Aorta (tissue), 5 donors: ENCODE measurements at regions of chr3 and their contacts with region 1.

Region 1: GRCh38 chr3:37640636-37641375 is 220.9 kb upstream of the CTDSPL start:
- DNase-seq: no peak
- ATAC-seq: no peak
- H3K4me3 ChIP-seq: no peak overlapping the region
- H3K27ac ChIP-seq: no peak overlapping the region
- H3K4me1 ChIP-seq: peaks cover 0 to 13% of the 10 kb centered on the region in 2 donors
- H3K27me3 ChIP-seq: no peaks in the 10 kb centered on the region

Region 2: DNA sequence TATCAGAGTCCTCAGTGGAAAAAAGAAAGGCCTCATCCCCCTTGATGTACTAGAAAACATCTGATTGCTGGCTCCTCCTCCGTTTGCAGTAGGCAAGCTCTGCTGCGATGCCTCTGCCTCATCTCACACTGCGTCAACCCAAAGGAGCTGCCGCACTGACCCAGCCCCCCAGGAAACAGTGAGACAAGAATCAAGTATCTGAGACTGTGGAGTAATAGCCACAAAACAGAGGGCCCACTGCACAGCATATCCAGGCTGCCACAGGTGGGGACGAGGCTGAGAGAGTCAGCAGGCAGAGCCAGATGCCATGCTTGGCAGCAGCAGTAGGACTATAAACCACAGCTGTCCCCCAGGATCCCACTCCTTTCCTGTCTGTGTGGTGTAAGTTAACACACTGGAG is 1094.6 kb before region 1 on chr3:
- intact Hi-C with region 1: no loop called
- DNase-seq: no peak
- ATAC-seq: no peak
- H3K4me3 ChIP-seq: no peak overlapping the region
- H3K27ac ChIP-seq: no peak overlapping the region
- H3K4me1 ChIP-seq: no peaks in the 10 kb centered on the region
- H3K27me3 ChIP-seq: no peaks in the 10 kb centered on the region

Region 3: DNA sequence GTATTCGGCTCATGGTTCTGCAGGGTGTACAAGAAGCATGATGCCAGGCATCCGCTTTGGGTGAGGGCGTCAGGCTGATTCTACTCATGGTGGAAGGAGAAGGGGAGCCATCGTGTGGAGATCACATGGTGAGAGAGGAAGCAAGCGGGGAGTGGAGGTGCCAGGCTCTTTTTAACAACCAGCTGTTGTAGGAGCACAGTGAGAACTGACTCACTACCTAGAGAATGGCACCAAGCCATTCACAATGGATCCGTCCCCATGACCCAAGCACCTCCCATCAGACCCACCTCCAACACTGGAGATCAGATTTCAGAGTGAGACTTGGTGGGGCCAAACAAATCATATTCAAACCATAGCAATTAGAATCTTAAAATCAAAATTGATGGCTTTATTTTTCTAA is 39.0 kb before region 1 on chr3:
- intact Hi-C with region 1: loop called in 1 of 2 experiments (anchors 5 kb)
- DNase-seq: no peak
- ATAC-seq: peak; percentile 19
- H3K4me3 ChIP-seq: no peak overlapping the region
- H3K27ac ChIP-seq: peak overlapping the region in 1 of 2 donors; percentile 42
- H3K4me1 ChIP-seq: peaks cover 6 to 21% of the 10 kb centered on the region in 2 donors
- H3K27me3 ChIP-seq: no peaks in the 10 kb centered on the region